ENCODE measurements at regions of chr9 and their contacts with region 1.

Region 1: GRCh38 chr9:87812375-87813118 is 70.1 kb upstream of the SPATA31E1 start:
- DNase-seq: peak; percentile 35 to 47 (median 44)
- ATAC-seq: peak; percentile 22; the same call in 1 of the 3 replicates
- H3K4me3 ChIP-seq: no peak overlapping the region
- H3K27ac ChIP-seq: no peak overlapping the region
- H3K4me1 ChIP-seq: peaks cover 15 to 29% of the 10 kb centered on the region in 2 experiments; a peak in 3 of 5 replicates
- H3K27me3 ChIP-seq: no peaks in the 10 kb centered on the region
- CTCF ChIP-seq: peak; percentile 79 to 97 (median 92)
- EP300 ChIP-seq: no peak
- POLR2A ChIP-seq: no peak
- RAD21 ChIP-seq: peak; percentile 83 to 89

Region 2: DNA sequence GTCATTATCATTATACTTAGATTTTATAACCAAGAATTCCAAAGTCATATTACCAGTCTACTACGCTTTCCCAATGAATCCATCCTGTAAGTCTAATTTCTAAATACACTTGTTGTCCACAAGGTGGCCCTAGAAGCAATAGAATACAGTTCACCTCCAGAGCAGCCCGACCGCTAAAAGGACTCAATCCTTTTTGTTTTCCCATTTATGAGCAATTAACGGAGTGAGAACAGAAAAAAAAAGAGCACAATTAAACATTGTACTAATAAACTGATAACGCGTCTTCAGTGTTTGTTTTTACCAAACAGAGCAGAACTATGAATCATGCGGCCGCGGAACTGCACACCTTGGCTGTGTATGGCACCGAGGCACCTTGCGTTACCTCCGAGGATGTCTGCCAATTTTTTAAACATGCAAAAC is 475.6 kb before region 1 on chr9:
- CTCF ChIA-PET with region 1: no interaction called
- POLR2A ChIA-PET with region 1: no interaction called
- in situ Hi-C with region 1: loop called (anchors 25 kb)
- intact Hi-C with region 1: no loop called
- DNase-seq: peak; percentile 41 to 76 (median 48)
- ATAC-seq: peak; percentile 88
- H3K4me3 ChIP-seq: no peak overlapping the region
- H3K27ac ChIP-seq: no peak overlapping the region
- H3K4me1 ChIP-seq: peaks cover 0 to 2% of the 10 kb centered on the region in 2 experiments; a peak in 2 of 5 replicates
- H3K27me3 ChIP-seq: no peaks in the 10 kb centered on the region
- CTCF ChIP-seq: peak; percentile 51 to 73 (median 61); a peak in 5 of 6 replicates
- EP300 ChIP-seq: no peak
- POLR2A ChIP-seq: no peak
- RAD21 ChIP-seq: peak; percentile 81 to 82

Region 3: DNA sequence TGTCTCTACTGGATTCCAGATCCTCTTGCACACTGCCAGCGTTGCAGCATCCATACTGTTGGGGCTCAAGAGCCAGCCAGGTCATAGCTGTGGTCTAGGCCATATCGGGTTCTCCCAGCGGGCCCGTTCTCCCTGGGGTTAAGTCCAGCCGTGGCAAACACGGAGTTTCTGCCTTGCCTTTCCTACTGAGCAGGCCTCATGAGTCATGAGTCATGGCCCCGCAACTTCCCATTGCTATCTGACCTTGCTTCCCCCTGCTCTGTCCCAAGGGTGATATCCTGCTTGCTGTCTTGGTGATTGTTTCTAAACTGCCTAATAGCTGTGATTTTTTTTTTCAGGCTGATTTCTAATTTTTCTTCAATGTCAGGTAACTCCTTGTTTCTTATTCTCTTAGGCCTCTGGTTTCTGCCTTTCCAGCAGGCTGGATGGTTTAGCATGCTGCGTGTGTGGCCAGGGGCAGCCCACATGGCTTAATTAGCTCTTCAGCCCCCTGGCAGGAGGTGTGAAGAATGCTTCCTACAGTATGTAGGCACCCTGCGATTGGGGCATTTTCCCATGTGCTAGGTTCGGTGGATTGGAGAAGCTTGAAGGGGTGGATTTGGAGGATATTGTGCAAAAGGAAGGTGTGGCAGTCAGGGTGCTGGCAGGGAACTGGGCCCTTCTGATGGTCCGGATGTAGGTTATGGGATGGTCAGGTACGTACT is 296.2 kb before region 1 on chr9:
- CTCF ChIA-PET with region 1: no interaction called
- POLR2A ChIA-PET with region 1: no interaction called
- in situ Hi-C with region 1: no loop called
- intact Hi-C with region 1: loop called (anchors 10 kb)
- DNase-seq: peak; percentile 49 to 91 (median 66)
- ATAC-seq: peak; percentile 84
- H3K4me3 ChIP-seq: no peak overlapping the region
- H3K27ac ChIP-seq: peak overlapping the region; percentile 84; the same call in 2 of the 3 replicates
- H3K4me1 ChIP-seq: peaks cover 35 to 64% of the 10 kb centered on the region in 2 experiments
- H3K27me3 ChIP-seq: no peaks in the 10 kb centered on the region
- CTCF ChIP-seq: no peak
- EP300 ChIP-seq: peak; percentile 89
- POLR2A ChIP-seq: no peak
- RAD21 ChIP-seq: peak in 1 of 2 experiments; percentile 22; a peak in 2 of 4 replicates

Region 4: GRCh38 chr9:87678650-87679515 is 133.7 kb before region 1 on chr9:
- CTCF ChIA-PET with region 1: interaction called, 21 read pairs
- POLR2A ChIA-PET with region 1: interaction called, 3 read pairs
- in situ Hi-C with region 1: loop called (anchors 5 kb)
- intact Hi-C with region 1: loop called (anchors 1 kb)
- DNase-seq: peak; percentile 47 to 69 (median 57)
- ATAC-seq: peak; percentile 63
- H3K4me3 ChIP-seq: no peak overlapping the region
- H3K27ac ChIP-seq: no peak overlapping the region
- H3K4me1 ChIP-seq: peaks cover 9 to 10% of the 10 kb centered on the region in 2 experiments; a peak in 4 of 5 replicates
- H3K27me3 ChIP-seq: no peaks in the 10 kb centered on the region
- CTCF ChIP-seq: peak; percentile 70 to 77 (median 73)
- EP300 ChIP-seq: no peak
- POLR2A ChIP-seq: no peak
- RAD21 ChIP-seq: peak; percentile 54 to 79

Region 5: GRCh38 chr9:87684627-87685219 is 127.8 kb before region 1 on chr9:
- CTCF ChIA-PET with region 1: interaction called, 21 read pairs
- POLR2A ChIA-PET with region 1: interaction called, 3 read pairs
- in situ Hi-C with region 1: loop called (anchors 5 kb)
- intact Hi-C with region 1: loop called (anchors 1 kb)
- DNase-seq: peak; percentile 59 to 64 (median 60)
- ATAC-seq: peak; percentile 85
- H3K4me3 ChIP-seq: no peak overlapping the region
- H3K27ac ChIP-seq: no peak overlapping the region
- H3K4me1 ChIP-seq: peaks cover 10 to 14% of the 10 kb centered on the region in 2 experiments; a peak in 4 of 5 replicates
- H3K27me3 ChIP-seq: no peaks in the 10 kb centered on the region
- CTCF ChIP-seq: peak; percentile 65 to 79 (median 73)
- EP300 ChIP-seq: no peak
- POLR2A ChIP-seq: no peak
- RAD21 ChIP-seq: peak; percentile 63 to 80

Region 6: GRCh38 chr9:87725900-87726709 is 86.4 kb before region 1 on chr9 and contains the start of gene CTSL:
- CTCF ChIA-PET with region 1: interaction called, 4 read pairs
- POLR2A ChIA-PET with region 1: interaction called, 4 read pairs
- in situ Hi-C with region 1: no loop called
- intact Hi-C with region 1: loop called (anchors 2 kb)
- DNase-seq: peak; percentile 86 to 90 (median 88)
- ATAC-seq: peak; percentile 96
- H3K4me3 ChIP-seq: peak within 1 kb of the TSS; percentile 55
- H3K27ac ChIP-seq: peak within 1 kb of the TSS; percentile 82
- H3K4me1 ChIP-seq: peaks cover 15 to 18% of the 10 kb centered on the region in 2 experiments; a peak in 4 of 5 replicates
- H3K27me3 ChIP-seq: no peaks in the 10 kb centered on the region
- CTCF ChIP-seq: peak; percentile 47 to 81 (median 59); a peak in 5 of 6 replicates
- EP300 ChIP-seq: no peak
- POLR2A ChIP-seq: peak; percentile 88
- RAD21 ChIP-seq: peak; percentile 47 to 65
- polyA plus RNA-seq, gene CTSL: 55.9 to 61.8 TPM

Region 7: GRCh38 chr9:87792831-87793288 is 19.7 kb before region 1 on chr9:
- CTCF ChIA-PET with region 1: no interaction called
- POLR2A ChIA-PET with region 1: interaction called, 5 read pairs
- in situ Hi-C with region 1: no loop called
- intact Hi-C with region 1: loop called (anchors 1 kb)
- DNase-seq: peak; percentile 79 to 94 (median 83)
- ATAC-seq: peak; percentile 96
- H3K4me3 ChIP-seq: no peak overlapping the region; the same call in 1 of the 2 replicates
- H3K27ac ChIP-seq: peak overlapping the region; percentile 88
- H3K4me1 ChIP-seq: peaks cover 19 to 66% of the 10 kb centered on the region in 2 experiments; a peak in 4 of 5 replicates
- H3K27me3 ChIP-seq: no peaks in the 10 kb centered on the region
- CTCF ChIP-seq: peak; percentile 42 to 58 (median 49)
- EP300 ChIP-seq: peak; percentile 84
- POLR2A ChIP-seq: peak; percentile 77
- RAD21 ChIP-seq: peak; percentile 38 to 58; a peak in 3 of 4 replicates